ENCODE measurements at regions of chr15 and their contacts with region 1.

Region 1: GRCh38 chr15:90071208-90071807 is 31.0 kb downstream of the IDH2 start:
- DNase-seq: peak; percentile 73 to 87 (median 76)
- ATAC-seq: peak; percentile 94
- H3K4me3 ChIP-seq: no peak overlapping the region
- H3K27ac ChIP-seq: no peak overlapping the region
- H3K4me1 ChIP-seq: peaks cover 0 to 17% of the 10 kb centered on the region in 2 experiments; a peak in 1 of 5 replicates
- H3K27me3 ChIP-seq: no peaks in the 10 kb centered on the region
- CTCF ChIP-seq: peak; percentile 86 to 89 (median 87)
- EP300 ChIP-seq: no peak
- POLR2A ChIP-seq: no peak
- RAD21 ChIP-seq: peak; percentile 90 to 94

Region 2: GRCh38 chr15:89732451-89733172 is 338.7 kb before region 1 on chr15:
- CTCF ChIA-PET with region 1: no interaction called
- POLR2A ChIA-PET with region 1: no interaction called
- in situ Hi-C with region 1: loop called (anchors 10 kb)
- intact Hi-C with region 1: no loop called
- DNase-seq: no peak
- ATAC-seq: no peak
- H3K4me3 ChIP-seq: no peak overlapping the region
- H3K27ac ChIP-seq: no peak overlapping the region
- H3K4me1 ChIP-seq: no peaks in the 10 kb centered on the region
- H3K27me3 ChIP-seq: peaks cover 11 to 56% of the 10 kb centered on the region in 2 experiments; a peak in 4 of 5 replicates
- CTCF ChIP-seq: peak in 1 of 3 experiments; percentile 11; a peak in 1 of 6 replicates
- EP300 ChIP-seq: no peak
- POLR2A ChIP-seq: no peak
- RAD21 ChIP-seq: no peak

Region 3: GRCh38 chr15:89971592-89971997 is 99.7 kb before region 1 on chr15:
- CTCF ChIA-PET with region 1: no interaction called
- POLR2A ChIA-PET with region 1: no interaction called
- in situ Hi-C with region 1: no loop called
- intact Hi-C with region 1: loop called (anchors 1 kb)
- DNase-seq: peak; percentile 50 to 78 (median 65)
- ATAC-seq: peak; percentile 100
- H3K4me3 ChIP-seq: no peak overlapping the region
- H3K27ac ChIP-seq: no peak overlapping the region
- H3K4me1 ChIP-seq: no peaks in the 10 kb centered on the region
- H3K27me3 ChIP-seq: no peaks in the 10 kb centered on the region
- CTCF ChIP-seq: peak; percentile 90 to 99 (median 98)
- EP300 ChIP-seq: no peak
- POLR2A ChIP-seq: no peak
- RAD21 ChIP-seq: peak; percentile 54 to 76

Region 4: GRCh38 chr15:90529371-90530249 is 458.3 kb after region 1 on chr15 and contains the start of gene CRTC3:
- CTCF ChIA-PET with region 1: no interaction called
- POLR2A ChIA-PET with region 1: no interaction called
- in situ Hi-C with region 1: no loop called
- intact Hi-C with region 1: no loop called
- DNase-seq: peak; percentile 64 to 93 (median 90)
- ATAC-seq: peak; percentile 90
- H3K4me3 ChIP-seq: peak within 1 kb of the TSS; percentile 65
- H3K27ac ChIP-seq: peak within 1 kb of the TSS; percentile 86
- H3K4me1 ChIP-seq: peaks cover 4 to 25% of the 10 kb centered on the region in 2 experiments; a peak in 3 of 5 replicates
- H3K27me3 ChIP-seq: no peaks in the 10 kb centered on the region
- CTCF ChIP-seq: 0 out of 6 replicates have a peak, but pooled peaks of 1 of the 3 experiments have one; percentile 16
- EP300 ChIP-seq: no peak
- POLR2A ChIP-seq: peak; percentile 57
- RAD21 ChIP-seq: no peak
- polyA plus RNA-seq, gene CRTC3: 1.2 to 2.1 TPM